Activated CD8-positive, alpha-beta T cell treated with anti-CD3 and anti-CD28 coated beads for 36 hours (primary cell): ENCODE measurements at regions of chr7 and their contacts with region 1.

Region 1: DNA sequence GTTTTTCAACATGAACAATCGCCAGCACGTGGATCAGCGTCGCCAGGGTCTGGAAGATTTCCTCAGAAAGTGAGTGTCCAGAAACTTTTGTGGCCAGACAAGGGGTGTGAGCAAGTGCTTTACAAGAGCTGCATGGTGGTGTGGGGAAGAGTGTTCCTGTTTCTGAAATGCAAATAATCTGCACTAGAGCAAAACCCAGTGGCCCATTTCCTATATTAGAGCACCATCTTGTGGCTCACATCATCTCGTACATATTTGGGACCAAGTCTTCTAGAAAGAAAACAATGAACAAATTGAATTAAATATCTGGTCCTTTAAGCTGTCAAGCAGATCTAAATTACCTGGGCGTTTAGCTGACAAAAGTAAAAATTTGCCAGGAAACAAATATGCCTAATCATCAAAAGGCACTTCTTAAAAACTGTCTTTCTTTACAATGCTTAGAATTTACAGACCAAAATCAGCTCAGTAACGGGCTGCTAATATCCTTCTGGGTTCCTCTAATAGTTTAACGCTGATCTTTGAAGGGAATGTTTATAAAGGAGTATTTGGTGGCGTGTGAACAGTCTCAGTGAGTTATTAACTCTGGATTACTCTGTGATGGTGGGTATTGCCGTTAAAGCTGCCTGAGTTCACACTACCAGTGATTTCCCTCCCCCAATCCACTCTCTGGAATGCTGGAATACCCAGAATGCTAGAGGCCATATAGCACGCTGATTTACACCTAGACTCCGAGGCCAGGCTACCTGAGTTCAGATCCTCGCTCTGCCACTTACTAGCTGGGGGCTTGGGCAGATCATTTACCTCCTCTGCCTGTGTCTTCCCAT is 73.6 kb downstream of the SNX10 start:
- DNase-seq: peak; percentile 59
- ATAC-seq: peak; percentile 80
- H3K4me3 Mint-ChIP-seq: no peak overlapping the region
- H3K27ac Mint-ChIP-seq: no peak overlapping the region
- H3K4me1 Mint-ChIP-seq: peaks cover 11% of the 10 kb centered on the region
- H3K27me3 Mint-ChIP-seq: no peaks in the 10 kb centered on the region
- CTCF ChIP-seq: peak; percentile 70

Region 2: GRCh38 chr7:26090927-26091519 is 274.3 kb before region 1 on chr7:
- CTCF ChIA-PET with region 1: interaction called, 71 read pairs
- POLR2A ChIA-PET with region 1: no interaction called
- intact Hi-C with region 1: loop called (anchors 5 kb)
- DNase-seq: peak; percentile 20
- ATAC-seq: peak; percentile 59
- H3K4me3 Mint-ChIP-seq: peak overlapping the region; percentile 1
- H3K27ac Mint-ChIP-seq: peak overlapping the region; percentile 33
- H3K4me1 Mint-ChIP-seq: peaks cover 20% of the 10 kb centered on the region
- H3K27me3 Mint-ChIP-seq: no peaks in the 10 kb centered on the region
- CTCF ChIP-seq: peak; percentile 78

Region 3: GRCh38 chr7:26284995-26285632 is 80.2 kb before region 1 on chr7:
- CTCF ChIA-PET with region 1: interaction called, 13 read pairs
- POLR2A ChIA-PET with region 1: no interaction called
- intact Hi-C with region 1: loop called (anchors 5 kb)
- DNase-seq: peak; percentile 22
- ATAC-seq: peak; percentile 96
- H3K4me3 Mint-ChIP-seq: no peak overlapping the region
- H3K27ac Mint-ChIP-seq: no peak overlapping the region
- H3K4me1 Mint-ChIP-seq: peaks cover 10% of the 10 kb centered on the region
- H3K27me3 Mint-ChIP-seq: no peaks in the 10 kb centered on the region
- CTCF ChIP-seq: peak; percentile 51

Region 4: DNA sequence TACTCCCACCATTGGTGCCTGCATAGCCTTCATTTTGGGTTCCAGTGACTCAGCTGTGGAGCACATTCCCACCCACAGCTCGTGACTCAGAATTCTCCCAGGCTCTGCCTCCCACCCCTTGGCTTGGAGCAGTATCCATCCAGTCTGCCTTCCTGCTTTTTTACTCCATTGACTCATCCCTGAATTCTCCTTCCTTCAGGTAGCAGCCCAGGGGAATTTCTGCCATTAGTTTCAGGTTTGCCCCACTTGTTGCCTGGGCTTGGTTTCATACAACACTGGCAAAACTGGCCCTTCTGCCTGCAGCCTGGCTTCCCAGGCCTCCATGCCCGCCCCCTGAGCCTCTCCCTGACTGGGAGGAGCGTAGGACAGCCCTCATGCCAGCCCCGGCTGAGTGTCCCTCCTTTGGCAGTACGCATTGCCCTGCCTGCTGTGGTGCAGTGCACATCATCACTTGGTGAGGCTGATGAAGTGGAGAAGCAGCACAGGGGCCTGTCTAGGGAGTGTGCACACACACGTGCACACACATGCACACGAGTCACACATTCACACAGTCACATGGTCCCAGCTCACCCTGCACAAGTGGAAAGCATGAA is 18.6 kb before region 1 on chr7:
- CTCF ChIA-PET with region 1: interaction called, 16 read pairs
- POLR2A ChIA-PET with region 1: interaction called, 3 read pairs
- intact Hi-C with region 1: no loop called
- DNase-seq: no peak
- ATAC-seq: peak; percentile 70
- H3K4me3 Mint-ChIP-seq: no peak overlapping the region
- H3K27ac Mint-ChIP-seq: no peak overlapping the region
- H3K4me1 Mint-ChIP-seq: peaks cover 4% of the 10 kb centered on the region
- H3K27me3 Mint-ChIP-seq: no peaks in the 10 kb centered on the region
- CTCF ChIP-seq: no peak

Region 5: DNA sequence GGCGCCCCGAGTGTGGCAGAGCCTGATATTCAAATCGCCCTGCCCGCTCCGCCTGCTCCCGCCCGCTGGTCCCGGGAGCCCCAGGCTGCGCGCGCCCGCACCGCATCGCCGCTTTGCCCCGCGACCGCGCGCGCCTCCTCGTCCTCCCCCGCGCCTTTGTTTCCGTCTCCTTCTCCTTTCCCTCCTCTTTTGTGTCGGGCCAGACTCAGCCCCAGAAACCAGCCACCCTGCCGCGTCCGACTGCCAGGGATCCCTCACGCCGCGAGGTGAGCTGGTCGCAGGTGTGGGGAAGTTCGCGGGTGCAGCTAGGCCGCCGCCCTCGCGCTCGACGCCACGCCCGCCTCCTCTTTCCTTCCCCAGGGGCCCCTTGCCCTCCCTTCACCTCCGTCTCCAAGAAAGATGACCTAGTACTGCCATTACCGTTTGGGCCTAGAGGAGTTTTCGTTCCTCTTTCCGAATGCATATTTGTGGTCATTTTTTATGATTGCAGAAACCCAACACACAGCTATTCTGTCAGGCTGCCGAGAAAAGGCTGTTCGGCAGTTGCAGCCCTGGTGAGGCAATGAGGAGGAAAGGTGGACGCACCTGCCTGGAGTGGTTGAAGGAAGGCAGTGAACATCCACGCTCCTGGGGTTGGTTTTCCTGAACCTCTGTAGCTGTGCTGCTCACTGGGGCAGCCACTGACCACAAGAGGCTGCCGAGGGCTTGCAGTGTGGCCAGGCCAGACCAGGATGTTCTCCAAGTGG is 33.6 kb after region 1 on chr7:
- CTCF ChIA-PET with region 1: interaction called, 26 read pairs
- POLR2A ChIA-PET with region 1: no interaction called
- intact Hi-C with region 1: no loop called
- DNase-seq: peak; percentile 64
- ATAC-seq: peak; percentile 64
- H3K4me3 Mint-ChIP-seq: peak overlapping the region; percentile 81
- H3K27ac Mint-ChIP-seq: peak overlapping the region; percentile 87
- H3K4me1 Mint-ChIP-seq: peaks cover 14% of the 10 kb centered on the region
- H3K27me3 Mint-ChIP-seq: peaks cover 45% of the 10 kb centered on the region
- CTCF ChIP-seq: no peak

Region 6: GRCh38 chr7:26429168-26429567 is 63.9 kb after region 1 on chr7:
- CTCF ChIA-PET with region 1: no interaction called
- POLR2A ChIA-PET with region 1: no interaction called
- intact Hi-C with region 1: no loop called
- DNase-seq: no peak
- ATAC-seq: no peak
- H3K4me3 Mint-ChIP-seq: no peak overlapping the region
- H3K27ac Mint-ChIP-seq: no peak overlapping the region
- H3K4me1 Mint-ChIP-seq: no peaks in the 10 kb centered on the region
- H3K27me3 Mint-ChIP-seq: peaks cover 7% of the 10 kb centered on the region
- CTCF ChIP-seq: no peak

Region 7: GRCh38 chr7:26686448-26686981 is 321.2 kb after region 1 on chr7:
- CTCF ChIA-PET with region 1: interaction called, 13 read pairs
- POLR2A ChIA-PET with region 1: no interaction called
- intact Hi-C with region 1: no loop called
- DNase-seq: peak; percentile 4
- ATAC-seq: peak; percentile 30
- H3K4me3 Mint-ChIP-seq: no peak overlapping the region
- H3K27ac Mint-ChIP-seq: no peak overlapping the region
- H3K4me1 Mint-ChIP-seq: no peaks in the 10 kb centered on the region
- H3K27me3 Mint-ChIP-seq: peaks cover 12% of the 10 kb centered on the region
- CTCF ChIP-seq: peak; percentile 74